ENCODE measurements at regions of chr2 and their contacts with region 1.

Region 1: GRCh38 chr2:207529330-207530159 is at the start of gene CREB1:
- DNase-seq: peak; percentile 99
- H3K4me3 ChIP-seq: peak within 1 kb of the TSS; percentile 88 to 94 (median 89)
- H3K27ac ChIP-seq: peak within 1 kb of the TSS; percentile 99
- H3K4me1 ChIP-seq: peaks cover 19% of the 10 kb centered on the region
- H3K27me3 ChIP-seq: no peaks in the 10 kb centered on the region
- CTCF ChIP-seq: no peak
- total RNA-seq, gene CREB1: 42.3 to 75.5 TPM

Region 2: GRCh38 chr2:207008105-207008990 is 521.2 kb before region 1 on chr2:
- CTCF ChIA-PET with region 1: interaction called, 22 read pairs
- dilution Hi-C with region 1: no loop called
- in situ Hi-C with region 1: no loop called
- intact Hi-C with region 1: no loop called
- DNase-seq: no peak
- H3K4me3 ChIP-seq: no peak overlapping the region
- H3K27ac ChIP-seq: peak overlapping the region; percentile 13
- H3K4me1 ChIP-seq: peaks cover 31% of the 10 kb centered on the region
- H3K27me3 ChIP-seq: no peaks in the 10 kb centered on the region
- CTCF ChIP-seq: peak; percentile 21 to 42

Region 3: GRCh38 chr2:207503234-207503633 is 26.3 kb before region 1 on chr2:
- CTCF ChIA-PET with region 1: no interaction called
- dilution Hi-C with region 1: no loop called
- in situ Hi-C with region 1: no loop called
- intact Hi-C with region 1: loop called (anchors 1 kb)
- DNase-seq: no peak
- H3K4me3 ChIP-seq: no peak overlapping the region
- H3K27ac ChIP-seq: no peak overlapping the region
- H3K4me1 ChIP-seq: peaks cover 37% of the 10 kb centered on the region
- H3K27me3 ChIP-seq: no peaks in the 10 kb centered on the region
- CTCF ChIP-seq: no peak

Region 4: DNA sequence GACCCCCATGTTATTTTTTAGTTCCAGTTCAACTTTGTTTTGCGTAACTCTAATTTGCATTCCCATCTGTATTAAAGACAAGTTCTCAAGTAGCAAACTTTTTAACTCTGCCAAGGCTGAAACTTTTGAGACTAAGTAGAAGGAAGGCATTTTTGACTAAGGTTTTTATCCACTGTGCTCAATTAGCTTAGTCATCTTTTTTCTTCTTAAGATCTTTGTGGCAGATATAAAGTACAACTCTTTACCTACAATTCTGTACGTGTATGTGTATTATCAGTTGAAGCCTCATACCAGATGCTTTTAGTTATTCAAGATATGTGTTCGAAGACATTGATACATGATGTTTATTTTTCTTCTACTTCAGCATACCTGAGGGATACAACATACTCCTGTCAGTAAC is 41.8 kb after region 1 on chr2:
- CTCF ChIA-PET with region 1: no interaction called
- dilution Hi-C with region 1: no loop called
- in situ Hi-C with region 1: no loop called
- intact Hi-C with region 1: no loop called
- DNase-seq: no peak
- H3K4me3 ChIP-seq: no peak overlapping the region
- H3K27ac ChIP-seq: no peak overlapping the region
- H3K4me1 ChIP-seq: no peaks in the 10 kb centered on the region
- H3K27me3 ChIP-seq: no peaks in the 10 kb centered on the region
- CTCF ChIP-seq: no peak

Region 5: DNA sequence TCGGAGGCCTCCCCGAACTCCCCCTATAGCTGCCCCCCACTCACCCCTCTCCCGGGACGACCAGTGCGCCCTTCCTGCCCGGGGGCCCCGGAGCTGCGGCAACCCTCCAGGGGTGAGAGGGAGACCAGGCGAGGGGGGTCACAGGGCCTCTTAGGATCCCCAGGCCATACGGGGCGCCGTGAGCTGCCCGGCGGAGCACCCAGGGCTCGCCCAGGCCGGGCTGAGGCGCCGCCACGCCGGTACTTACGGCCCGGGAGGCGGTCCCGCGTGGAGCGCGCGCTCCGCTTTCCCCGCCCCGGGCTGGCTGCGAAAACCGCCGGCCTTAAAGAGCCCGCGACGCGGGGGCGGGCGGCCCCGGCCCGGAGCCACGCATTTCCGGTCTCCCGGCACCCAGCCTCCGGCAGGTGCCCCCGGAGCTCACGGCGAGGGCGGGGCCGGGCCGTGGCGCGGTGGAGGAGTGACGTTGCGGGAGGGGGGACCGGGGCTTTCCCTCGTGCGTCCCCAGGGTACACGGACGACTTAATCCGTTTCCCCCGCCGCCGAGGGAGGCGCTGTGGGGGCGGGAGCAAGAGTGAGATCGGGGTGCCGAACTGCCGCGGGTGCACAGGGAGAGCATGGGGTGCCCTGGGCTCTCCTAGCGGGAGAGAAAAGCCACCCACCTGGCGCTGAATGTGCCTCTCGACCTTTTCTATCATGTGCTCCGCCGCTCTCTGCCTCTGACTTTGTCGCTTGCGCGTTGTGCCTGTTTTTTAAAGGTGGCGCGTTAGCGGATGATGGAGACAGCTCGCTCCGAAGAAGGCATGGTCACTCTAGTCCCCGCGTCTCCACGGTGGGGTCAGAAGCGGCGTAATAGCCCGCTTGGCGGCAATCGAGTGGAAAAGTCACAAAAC is 95.7 kb after region 1 on chr2 and contains the start of gene METTL21A:
- CTCF ChIA-PET with region 1: no interaction called
- dilution Hi-C with region 1: no loop called
- in situ Hi-C with region 1: no loop called
- intact Hi-C with region 1: loop called (anchors 2 kb)
- DNase-seq: peak; percentile 86
- H3K4me3 ChIP-seq: peak within 1 kb of the TSS; percentile 62 to 84 (median 65)
- H3K27ac ChIP-seq: peak within 1 kb of the TSS; percentile 65
- H3K4me1 ChIP-seq: peaks cover 15% of the 10 kb centered on the region
- H3K27me3 ChIP-seq: no peaks in the 10 kb centered on the region
- CTCF ChIP-seq: peak in 1 of 2 donors; percentile 56
- total RNA-seq, gene METTL21A: 8.7 to 9.0 TPM

Region 6: DNA sequence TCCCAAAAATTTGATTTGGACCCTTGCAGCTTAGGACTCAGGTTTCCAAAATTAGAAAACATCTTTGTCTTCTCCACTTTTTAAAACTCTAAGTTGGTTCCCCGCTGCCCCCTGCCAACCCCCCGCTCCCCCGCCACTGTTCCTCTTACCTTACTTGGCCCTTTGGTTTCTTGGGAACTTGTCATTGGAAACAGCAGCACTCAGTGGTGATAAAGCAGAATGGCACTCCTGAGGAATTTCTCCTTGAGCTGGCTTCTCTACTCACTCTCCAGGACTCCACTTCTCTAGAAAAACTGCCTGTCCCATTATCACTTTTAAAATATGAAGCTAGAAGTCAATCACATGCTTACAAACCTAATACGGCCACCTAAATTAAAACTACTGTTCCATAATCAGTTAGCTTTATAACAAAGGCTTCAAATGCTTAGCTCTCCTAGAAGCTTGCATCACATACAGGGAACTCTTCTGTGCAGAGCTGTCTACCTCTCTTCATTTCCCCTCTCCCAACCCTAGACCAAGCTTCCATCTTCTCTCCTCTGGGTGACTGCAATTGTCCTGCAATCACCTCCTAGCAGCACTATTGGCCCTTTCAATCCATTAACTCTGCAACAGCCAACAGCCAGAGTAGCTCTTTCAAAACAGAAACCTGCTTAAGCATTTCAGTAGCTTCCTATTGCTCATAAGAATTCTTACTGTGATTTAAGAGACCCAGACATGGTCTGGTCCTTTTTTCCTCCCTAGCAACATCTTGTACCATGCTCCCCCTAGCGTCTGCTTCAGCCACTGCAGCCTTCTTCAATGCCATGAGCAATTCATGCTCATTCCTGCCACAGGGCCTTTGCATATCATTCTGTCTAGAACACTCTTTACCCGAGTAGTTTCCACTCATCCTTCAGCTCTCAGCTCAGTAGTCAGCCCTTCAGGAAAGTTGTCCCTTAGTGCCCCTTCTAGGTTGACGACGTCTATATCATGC is 510.9 kb after region 1 on chr2:
- CTCF ChIA-PET with region 1: interaction called, 14 read pairs
- dilution Hi-C with region 1: no loop called
- in situ Hi-C with region 1: no loop called
- intact Hi-C with region 1: no loop called
- DNase-seq: peak; percentile 50
- H3K4me3 ChIP-seq: no peak overlapping the region
- H3K27ac ChIP-seq: no peak overlapping the region
- H3K4me1 ChIP-seq: no peaks in the 10 kb centered on the region
- H3K27me3 ChIP-seq: no peaks in the 10 kb centered on the region
- CTCF ChIP-seq: peak; percentile 73 to 93

Measured in mammary epithelial cell (primary cell).